Activated CD4-positive, alpha-beta memory T cell treated with anti-CD3 and anti-CD28 coated beads for 36 hours (primary cell): ENCODE measurements at regions of chr4 and their contacts with region 1.

Region 1: DNA sequence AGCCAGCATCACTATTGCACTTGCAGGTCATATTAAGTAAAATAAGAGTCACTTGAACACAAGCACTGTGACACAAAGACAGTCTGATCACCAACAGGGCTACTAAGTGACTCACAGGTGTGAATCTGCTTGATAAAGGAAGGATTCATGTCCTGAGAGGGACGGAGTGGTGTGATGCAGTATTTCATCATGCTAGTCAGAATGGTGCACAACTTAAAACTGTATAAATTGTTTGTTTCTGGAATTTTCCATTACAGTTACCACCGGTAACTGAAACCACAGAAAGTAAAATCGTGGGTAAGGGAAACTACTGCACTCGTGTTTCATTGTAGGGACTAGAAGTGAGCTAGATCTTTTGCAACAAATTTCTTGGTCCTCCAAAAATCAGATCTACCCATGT is 109.7 kb downstream of the ELOVL6 start:
- DNase-seq: peak; percentile 43
- H3K4me3 Mint-ChIP-seq: no peak overlapping the region
- H3K27ac Mint-ChIP-seq: peak overlapping the region; percentile 47
- H3K4me1 Mint-ChIP-seq: peaks cover 57% of the 10 kb centered on the region
- H3K27me3 Mint-ChIP-seq: no peaks in the 10 kb centered on the region

Region 2: GRCh38 chr4:109368661-109369060 is 720.0 kb before region 1 on chr4:
- CTCF ChIA-PET with region 1: no interaction called
- POLR2A ChIA-PET with region 1: no interaction called
- intact Hi-C with region 1: no loop called
- DNase-seq: no peak
- H3K4me3 Mint-ChIP-seq: no peak overlapping the region
- H3K27ac Mint-ChIP-seq: no peak overlapping the region
- H3K4me1 Mint-ChIP-seq: peaks cover 4% of the 10 kb centered on the region
- H3K27me3 Mint-ChIP-seq: peaks cover 27% of the 10 kb centered on the region

Region 3: GRCh38 chr4:110055158-110055768 is 33.4 kb before region 1 on chr4:
- CTCF ChIA-PET with region 1: interaction called, 4 read pairs
- POLR2A ChIA-PET with region 1: interaction called, 3 read pairs
- intact Hi-C with region 1: loop called (anchors 1 kb)
- DNase-seq: peak; percentile 34
- H3K4me3 Mint-ChIP-seq: no peak overlapping the region
- H3K27ac Mint-ChIP-seq: peak overlapping the region; percentile 34
- H3K4me1 Mint-ChIP-seq: peaks cover 26% of the 10 kb centered on the region
- H3K27me3 Mint-ChIP-seq: no peaks in the 10 kb centered on the region

Region 4: GRCh38 chr4:110165382-110166285 is 77.0 kb after region 1 on chr4:
- CTCF ChIA-PET with region 1: no interaction called
- POLR2A ChIA-PET with region 1: no interaction called
- intact Hi-C with region 1: loop called (anchors 2 kb)
- DNase-seq: peak; percentile 81
- H3K4me3 Mint-ChIP-seq: peak overlapping the region; percentile 33
- H3K27ac Mint-ChIP-seq: peak overlapping the region; percentile 93
- H3K4me1 Mint-ChIP-seq: peaks cover 30% of the 10 kb centered on the region
- H3K27me3 Mint-ChIP-seq: no peaks in the 10 kb centered on the region

Region 5: GRCh38 chr4:110287130-110287529 is 198.5 kb after region 1 on chr4:
- CTCF ChIA-PET with region 1: no interaction called
- POLR2A ChIA-PET with region 1: no interaction called
- intact Hi-C with region 1: loop called (anchors 1 kb)
- DNase-seq: peak; percentile 30
- H3K4me3 Mint-ChIP-seq: no peak overlapping the region
- H3K27ac Mint-ChIP-seq: no peak overlapping the region
- H3K4me1 Mint-ChIP-seq: peaks cover 6% of the 10 kb centered on the region
- H3K27me3 Mint-ChIP-seq: peaks cover 30% of the 10 kb centered on the region